ENCODE measurements at regions of chr10 and their contacts with region 1.

Region 1: GRCh38 chr10:78302989-78303854 is 269.6 kb downstream of the RPS24 start:
- DNase-seq: peak; percentile 96
- H3K4me3 ChIP-seq: peak overlapping the region; percentile 63 to 67 (median 66)
- H3K27ac ChIP-seq: peak overlapping the region; percentile 88 to 92 (median 90)
- H3K4me1 ChIP-seq: peaks cover 11 to 46% (median 27%) of the 10 kb centered on the region in 4 donors
- H3K27me3 ChIP-seq: no peaks in the 10 kb centered on the region
- CTCF ChIP-seq: peak; percentile 51 to 78 (median 55)
- EP300 ChIP-seq: no peak
- POLR2A ChIP-seq: peak; percentile 10

Region 2: GRCh38 chr10:78047314-78047891 is 255.8 kb before region 1 on chr10:
- intact Hi-C with region 1: loop called (anchors 10 kb)
- DNase-seq: peak; percentile 96
- H3K4me3 ChIP-seq: no peak overlapping the region
- H3K27ac ChIP-seq: no peak overlapping the region
- H3K4me1 ChIP-seq: peaks cover 10 to 21% (median 14%) of the 10 kb centered on the region in 4 donors
- H3K27me3 ChIP-seq: no peaks in the 10 kb centered on the region
- CTCF ChIP-seq: peak; percentile 89 to 94 (median 93)
- EP300 ChIP-seq: no peak
- POLR2A ChIP-seq: no peak

Region 3: DNA sequence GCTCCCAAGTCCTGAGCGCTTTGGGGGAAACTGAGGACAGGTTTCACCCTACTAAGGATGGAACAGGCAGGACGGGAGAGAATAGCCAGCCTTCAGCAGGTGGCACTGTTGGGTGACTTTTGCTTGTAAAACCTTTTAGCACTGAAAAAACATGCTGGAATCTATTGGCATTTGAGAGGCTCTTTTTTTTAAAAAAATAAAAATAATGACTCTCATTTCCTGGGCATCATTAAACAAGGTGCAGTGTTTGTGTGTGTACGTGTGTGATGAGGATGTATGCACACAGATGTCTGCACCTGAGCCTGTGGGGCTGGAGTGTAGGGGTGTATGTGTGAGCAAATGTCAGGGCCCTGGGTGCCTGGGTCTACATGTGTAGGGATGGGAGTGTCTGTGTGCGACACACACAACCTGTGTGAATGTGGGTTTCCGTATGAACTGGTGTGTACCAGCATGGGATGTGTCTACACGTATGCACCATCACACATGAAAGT is 91.6 kb before region 1 on chr10:
- intact Hi-C with region 1: loop called (anchors 5 kb)
- DNase-seq: no peak
- H3K4me3 ChIP-seq: no peak overlapping the region
- H3K27ac ChIP-seq: peak overlapping the region; percentile 45 to 64 (median 60)
- H3K4me1 ChIP-seq: peaks cover 31 to 41% (median 38%) of the 10 kb centered on the region in 4 donors
- H3K27me3 ChIP-seq: no peaks in the 10 kb centered on the region
- CTCF ChIP-seq: peak; percentile 50 to 71 (median 64)
- EP300 ChIP-seq: no peak
- POLR2A ChIP-seq: no peak

Region 4: DNA sequence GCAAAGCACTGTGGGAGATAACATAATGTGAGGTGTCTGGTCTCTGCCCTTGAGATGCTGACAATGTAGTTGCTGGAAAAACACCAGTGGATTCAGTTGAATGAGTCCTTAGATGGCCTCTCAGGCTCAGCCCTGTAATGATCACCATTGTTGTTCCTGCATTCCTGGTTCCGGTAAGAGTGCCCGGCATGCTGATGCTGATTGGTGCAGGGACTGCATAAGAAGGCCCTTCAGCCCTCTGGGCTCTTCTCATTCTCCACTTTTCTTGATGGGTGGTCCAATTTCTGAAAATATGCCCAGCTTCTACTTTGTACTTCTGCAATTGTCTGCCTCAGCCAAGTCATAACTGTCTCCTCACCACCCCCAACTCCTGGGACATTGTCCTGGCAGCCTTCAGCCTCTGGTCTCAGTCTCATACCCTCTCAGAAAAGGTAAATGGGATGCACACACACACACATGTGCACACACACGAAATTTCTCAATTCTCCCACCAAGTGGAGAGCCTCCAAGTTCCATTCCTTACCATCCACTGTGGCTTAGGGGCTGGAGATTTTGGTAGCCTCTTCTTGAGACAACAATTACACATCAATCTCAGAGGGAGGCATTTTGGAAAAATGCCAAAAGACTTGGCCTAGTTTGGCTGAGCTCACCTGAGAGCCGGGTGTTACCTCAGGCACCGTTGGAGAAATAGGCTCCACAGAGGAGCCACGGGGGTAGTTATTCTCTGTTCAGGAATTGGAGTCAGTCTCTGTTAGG is 45.4 kb after region 1 on chr10:
- intact Hi-C with region 1: no loop called
- DNase-seq: peak; percentile 68
- H3K4me3 ChIP-seq: no peak overlapping the region
- H3K27ac ChIP-seq: no peak overlapping the region
- H3K4me1 ChIP-seq: peaks cover 0 to 3% (median 0%) of the 10 kb centered on the region in 4 donors
- H3K27me3 ChIP-seq: no peaks in the 10 kb centered on the region
- CTCF ChIP-seq: no peak
- EP300 ChIP-seq: no peak
- POLR2A ChIP-seq: no peak

Region 5: DNA sequence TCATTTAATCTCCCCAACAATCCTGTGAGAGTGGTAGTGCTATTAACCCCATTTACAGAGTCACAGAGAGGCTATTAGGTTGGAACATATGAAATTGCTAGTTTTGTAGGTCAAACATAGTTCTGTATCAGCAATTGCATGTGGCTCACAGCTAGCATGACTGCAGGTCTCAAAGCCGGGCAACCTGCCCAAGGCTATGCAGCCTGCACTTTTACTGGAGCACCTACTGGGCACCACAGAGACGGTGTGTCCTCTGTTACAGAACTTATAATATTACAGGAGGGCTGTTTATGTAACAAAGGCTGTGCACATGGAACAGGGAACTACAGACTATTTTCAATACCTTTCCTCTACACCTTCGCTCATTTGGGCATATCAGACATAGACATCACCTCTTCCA is 86.2 kb after region 1 on chr10:
- intact Hi-C with region 1: no loop called
- DNase-seq: no peak
- H3K4me3 ChIP-seq: no peak overlapping the region
- H3K27ac ChIP-seq: no peak overlapping the region
- H3K4me1 ChIP-seq: peaks cover 0 to 4% (median 1%) of the 10 kb centered on the region in 4 donors
- H3K27me3 ChIP-seq: no peaks in the 10 kb centered on the region
- CTCF ChIP-seq: no peak
- EP300 ChIP-seq: no peak
- POLR2A ChIP-seq: no peak

Region 6: GRCh38 chr10:78657163-78657861 is 354.1 kb after region 1 on chr10:
- intact Hi-C with region 1: loop called (anchors 5 kb)
- DNase-seq: no peak
- H3K4me3 ChIP-seq: no peak overlapping the region
- H3K27ac ChIP-seq: peak overlapping the region in 2 of 4 donors; percentile 23 to 58
- H3K4me1 ChIP-seq: peaks cover 0 to 30% (median 13%) of the 10 kb centered on the region in 4 donors
- H3K27me3 ChIP-seq: no peaks in the 10 kb centered on the region
- CTCF ChIP-seq: peak; percentile 67 to 79 (median 68)
- EP300 ChIP-seq: no peak
- POLR2A ChIP-seq: no peak